ENCODE measurements at regions of chr21 and their contacts with region 1.

Region 1: GRCh38 chr21:25385911-25386474 is 221.3 kb downstream of the MRPL39 start:
- DNase-seq: peak; percentile 59
- H3K4me3 ChIP-seq: no peak overlapping the region
- H3K27ac ChIP-seq: no peak overlapping the region
- H3K4me1 ChIP-seq: no peaks in the 10 kb centered on the region; the same call in 1 of the 2 replicates
- H3K27me3 ChIP-seq: no peaks in the 10 kb centered on the region

Region 2: GRCh38 chr21:25283720-25284119 is 102.3 kb before region 1 on chr21:
- in situ Hi-C with region 1: loop called (anchors 10 kb)
- DNase-seq: peak; percentile 68
- H3K4me3 ChIP-seq: no peak overlapping the region
- H3K27ac ChIP-seq: no peak overlapping the region
- H3K4me1 ChIP-seq: no peaks in the 10 kb centered on the region
- H3K27me3 ChIP-seq: no peaks in the 10 kb centered on the region

Region 3: GRCh38 chr21:25342816-25343215 is 43.2 kb before region 1 on chr21:
- in situ Hi-C with region 1: no loop called
- DNase-seq: peak; percentile 43
- H3K4me3 ChIP-seq: no peak overlapping the region
- H3K27ac ChIP-seq: no peak overlapping the region
- H3K4me1 ChIP-seq: peaks cover 14% of the 10 kb centered on the region
- H3K27me3 ChIP-seq: no peaks in the 10 kb centered on the region